ENCODE measurements at regions of chr19 and their contacts with region 1.

Region 1: GRCh38 chr19:6737284-6738046 is at the start of gene GPR108:
- DNase-seq: peak; percentile 100
- H3K4me3 ChIP-seq: peak within 1 kb of the TSS; percentile 81
- H3K27ac ChIP-seq: peak within 1 kb of the TSS; percentile 89
- H3K27me3 ChIP-seq: no peaks in the 10 kb centered on the region
- CTCF ChIP-seq: no peak
- polyA plus RNA-seq, gene GPR108: 34.5 and 50.8 TPM in 2 replicates

Region 2: DNA sequence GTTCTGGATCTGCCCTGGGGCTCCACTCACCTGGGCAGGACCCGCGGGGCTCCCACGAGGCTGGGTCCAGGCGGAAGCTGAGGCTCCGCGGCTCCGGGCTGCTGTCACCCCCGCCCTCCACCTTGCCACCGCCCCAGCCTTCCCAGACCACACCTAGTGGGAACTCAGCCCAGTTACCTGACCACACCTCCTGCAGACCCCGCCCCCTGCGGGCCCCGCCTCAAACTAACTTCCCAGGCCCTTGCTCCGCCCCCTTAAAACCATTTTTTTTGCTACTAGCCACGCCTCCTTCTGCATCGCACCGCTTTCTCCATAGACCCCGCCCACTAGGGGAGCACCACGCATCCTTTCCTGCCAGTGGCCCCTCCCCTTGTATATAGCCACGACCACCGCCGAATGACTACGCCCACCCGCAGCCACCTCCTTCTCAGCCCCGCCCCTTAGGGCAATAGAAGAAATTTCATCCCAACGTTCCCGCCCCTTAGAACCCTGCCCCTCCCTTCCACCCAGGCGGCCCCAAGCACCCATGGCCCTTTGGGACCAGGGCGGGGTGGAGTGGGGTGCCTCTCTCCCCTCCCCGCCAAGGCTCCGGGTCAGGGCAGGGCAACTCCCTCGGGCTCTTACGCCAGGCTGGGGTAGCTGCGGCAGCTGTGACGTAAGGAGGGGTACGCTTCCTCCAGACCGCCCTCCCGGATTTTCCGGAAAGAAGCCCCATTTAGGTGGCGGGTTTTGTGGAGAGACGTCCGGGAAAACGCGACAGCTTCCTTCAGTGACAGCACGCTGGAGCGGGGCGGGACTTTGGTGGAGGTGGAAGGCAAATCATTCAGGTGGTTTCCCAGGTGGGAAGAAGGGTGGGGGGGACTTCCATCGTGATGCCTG is 30.1 kb after region 1 on chr19 and contains the start of gene SH2D3A:
- CTCF ChIA-PET with region 1: interaction called, 14 read pairs
- POLR2A ChIA-PET with region 1: no interaction called
- DNase-seq: no peak
- H3K4me3 ChIP-seq: peak within 1 kb of the TSS; percentile 10
- H3K27ac ChIP-seq: no peak within 1 kb of the TSS
- H3K27me3 ChIP-seq: peaks cover 7% of the 10 kb centered on the region
- CTCF ChIP-seq: no peak
- polyA plus RNA-seq, gene SH2D3A: not detected in 2 replicates

Region 3: DNA sequence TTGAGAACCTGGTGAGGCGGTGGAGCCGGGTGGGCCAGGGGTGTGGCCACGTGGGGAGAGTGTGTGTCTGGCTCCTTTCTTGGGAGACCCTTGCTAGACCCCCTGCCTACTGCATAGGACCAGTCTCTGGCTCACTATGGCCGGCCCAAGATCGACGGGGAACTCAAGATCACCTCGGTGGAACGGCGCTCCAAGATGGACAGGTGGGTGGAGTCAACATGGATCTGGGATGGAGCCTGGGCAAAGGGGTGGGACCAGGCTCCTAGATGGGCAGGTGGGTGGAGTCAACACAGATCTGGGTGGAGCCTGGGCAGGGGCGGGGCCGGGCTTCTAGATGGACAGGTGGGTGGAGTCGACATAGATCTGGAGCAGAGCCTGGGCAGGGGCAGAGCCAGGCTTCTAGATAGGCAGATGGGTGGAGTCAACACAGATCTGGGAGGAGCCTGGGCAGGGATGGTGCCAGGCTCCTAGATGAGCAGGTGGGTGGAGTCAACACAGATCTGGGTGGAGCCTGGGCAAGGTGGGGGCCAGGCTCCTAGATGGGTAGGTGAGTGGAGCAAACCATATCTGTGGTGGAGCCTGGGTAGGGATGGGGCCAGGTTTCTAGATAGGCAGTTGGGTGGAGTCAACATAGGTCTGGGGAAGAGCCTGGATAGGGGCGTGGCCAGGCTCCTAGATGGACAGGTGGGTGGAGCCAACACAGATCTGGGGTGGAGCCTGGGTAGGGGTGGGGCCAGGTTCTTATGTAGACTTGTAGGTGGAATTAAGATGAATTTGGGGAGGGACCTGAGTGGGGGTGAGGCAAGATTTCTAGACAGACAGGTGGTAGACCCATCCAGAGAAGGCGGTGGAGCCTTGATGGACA is 91.5 kb after region 1 on chr19:
- CTCF ChIA-PET with region 1: no interaction called
- POLR2A ChIA-PET with region 1: no interaction called
- DNase-seq: no peak
- H3K4me3 ChIP-seq: no peak overlapping the region
- H3K27ac ChIP-seq: no peak overlapping the region
- H3K27me3 ChIP-seq: no peaks in the 10 kb centered on the region
- CTCF ChIP-seq: no peak

Region 4: GRCh38 chr19:6862673-6863078 is 125.2 kb after region 1 on chr19:
- CTCF ChIA-PET with region 1: interaction called, 33 read pairs
- POLR2A ChIA-PET with region 1: interaction called, 5 read pairs
- DNase-seq: peak; percentile 29
- H3K4me3 ChIP-seq: peak overlapping the region; percentile 22; the same call in 1 of the 2 replicates
- H3K27ac ChIP-seq: no peak overlapping the region
- H3K27me3 ChIP-seq: no peaks in the 10 kb centered on the region
- CTCF ChIP-seq: peak; percentile 88